HCT116 (cell line): ENCODE measurements at regions of chr19 and their contacts with region 1.

Region 1: DNA sequence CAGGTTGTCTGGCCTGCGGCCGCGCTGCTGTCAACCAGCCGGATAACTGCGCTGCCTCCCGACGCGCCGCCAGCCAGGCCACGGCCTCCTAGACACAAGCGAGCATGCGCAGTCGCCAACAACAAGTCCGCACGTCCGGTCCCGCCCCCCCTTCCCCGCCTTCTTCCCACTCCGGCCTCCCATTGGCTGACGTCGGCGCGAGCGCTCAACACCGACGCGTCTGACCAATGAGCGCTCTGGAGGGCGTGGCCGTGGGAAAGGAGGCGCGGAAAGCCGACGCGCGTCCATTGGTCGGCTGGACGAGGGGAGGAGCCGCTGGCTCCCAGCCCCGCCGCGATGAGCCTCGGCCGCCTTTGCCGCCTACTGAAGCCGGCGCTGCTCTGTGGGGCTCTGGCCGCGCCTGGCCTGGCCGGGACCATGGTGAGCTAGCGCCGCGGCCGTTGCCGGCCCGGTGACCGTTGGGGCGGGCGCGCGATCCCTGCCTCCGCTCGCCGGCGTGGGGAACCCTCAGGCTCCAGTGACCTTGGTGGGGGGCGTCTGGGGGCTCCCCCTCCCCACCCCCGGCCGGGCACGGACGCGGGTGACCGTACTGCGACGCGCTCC is at the start of gene GPX4:
- DNase-seq: peak; percentile 98
- ATAC-seq: peak; percentile 73
- H3K4me3 ChIP-seq: peak within 1 kb of the TSS; percentile 61 to 88
- H3K27ac ChIP-seq: peak within 1 kb of the TSS; percentile 99
- H3K4me1 ChIP-seq: peaks cover 32 to 74% of the 10 kb centered on the region in 2 experiments
- H3K27me3 ChIP-seq: no peaks in the 10 kb centered on the region
- CTCF ChIP-seq: no peak
- POLR2A ChIP-seq: peak; percentile 97
- RAD21 ChIP-seq: no peak
- total RNA-seq, gene GPX4: 481 TPM

Region 2: GRCh38 chr19:1015061-1015781 is 88.6 kb before region 1 on chr19:
- CTCF ChIA-PET with region 1: no interaction called
- POLR2A ChIA-PET with region 1: no interaction called
- RAD21 ChIA-PET with region 1: no interaction called
- intact Hi-C with region 1: no loop called
- DNase-seq: no peak
- ATAC-seq: no peak
- H3K4me3 ChIP-seq: no peak overlapping the region
- H3K27ac ChIP-seq: no peak overlapping the region
- H3K4me1 ChIP-seq: peaks cover 32 to 37% of the 10 kb centered on the region in 2 experiments
- H3K27me3 ChIP-seq: no peaks in the 10 kb centered on the region
- CTCF ChIP-seq: no peak
- POLR2A ChIP-seq: no peak
- RAD21 ChIP-seq: no peak

Region 3: GRCh38 chr19:1026189-1027019 is 77.4 kb before region 1 on chr19 and contains the start of gene CNN2:
- CTCF ChIA-PET with region 1: no interaction called
- POLR2A ChIA-PET with region 1: interaction called, 7 read pairs
- RAD21 ChIA-PET with region 1: no interaction called
- intact Hi-C with region 1: loop called (anchors 5 kb)
- DNase-seq: no peak
- ATAC-seq: peak; percentile 70
- H3K4me3 ChIP-seq: peak within 1 kb of the TSS; percentile 95 to 99
- H3K27ac ChIP-seq: peak within 1 kb of the TSS; percentile 99
- H3K4me1 ChIP-seq: peaks cover 29 to 46% of the 10 kb centered on the region in 2 experiments
- H3K27me3 ChIP-seq: no peaks in the 10 kb centered on the region
- CTCF ChIP-seq: no peak
- POLR2A ChIP-seq: no peak
- RAD21 ChIP-seq: no peak
- total RNA-seq, gene CNN2: 212 TPM

Region 4: DNA sequence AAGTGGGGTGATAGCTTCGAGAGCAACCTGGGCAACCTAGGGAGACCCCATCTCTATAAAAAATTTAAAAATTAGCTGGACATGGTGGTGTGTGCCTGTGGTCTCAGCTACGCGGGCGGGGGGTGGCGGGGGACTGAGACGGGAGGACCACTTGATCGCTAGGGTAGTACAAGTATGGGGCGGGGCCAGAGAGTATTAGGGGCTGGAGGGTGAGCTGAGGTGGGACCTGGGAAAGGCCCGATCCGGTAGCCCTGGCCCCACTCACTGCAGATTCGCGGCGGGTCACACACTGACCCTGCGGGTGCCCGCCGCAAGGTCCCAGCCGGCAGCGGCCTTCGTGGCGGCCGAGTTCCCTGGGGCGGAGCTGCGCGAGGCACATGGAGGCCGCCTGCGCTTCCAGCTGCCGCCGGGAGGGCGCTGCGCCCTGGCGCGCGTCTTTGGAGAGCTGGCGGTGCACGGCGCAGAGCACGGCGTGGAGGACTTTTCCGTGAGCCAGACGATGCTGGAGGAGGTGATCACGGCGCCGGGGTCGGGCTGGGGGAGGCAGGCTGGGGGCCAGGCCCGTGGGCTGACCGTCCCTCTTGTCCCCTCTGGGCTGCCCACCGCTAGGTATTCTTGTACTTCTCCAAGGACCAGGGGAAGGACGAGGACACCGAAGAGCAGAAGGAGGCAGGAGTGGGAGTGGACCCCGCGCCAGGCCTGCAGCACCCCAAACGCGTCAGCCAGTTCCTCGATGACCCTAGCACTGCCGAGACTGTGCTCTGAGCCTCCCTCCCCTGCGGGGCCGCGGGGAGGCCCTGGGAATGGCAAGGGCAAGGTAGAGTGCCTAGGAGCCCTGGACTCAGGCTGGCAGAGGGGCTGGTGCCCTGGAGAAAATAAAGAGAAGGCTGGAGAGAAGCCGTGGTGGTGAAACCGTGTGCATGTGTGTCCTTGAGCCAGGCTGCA is 38.9 kb before region 1 on chr19:
- CTCF ChIA-PET with region 1: interaction called, 3 read pairs
- POLR2A ChIA-PET with region 1: interaction called, 3 read pairs
- RAD21 ChIA-PET with region 1: interaction called, 3 to 4 read pairs
- intact Hi-C with region 1: loop called (anchors 5 kb)
- DNase-seq: peak; percentile 56
- ATAC-seq: peak; percentile 62
- H3K4me3 ChIP-seq: peak overlapping the region; percentile 64 to 78
- H3K27ac ChIP-seq: peak overlapping the region; percentile 100
- H3K4me1 ChIP-seq: peaks cover 36 to 71% of the 10 kb centered on the region in 2 experiments
- H3K27me3 ChIP-seq: no peaks in the 10 kb centered on the region
- CTCF ChIP-seq: peak in 2 of 3 experiments; percentile 70 to 83; a peak in 4 of 6 replicates
- POLR2A ChIP-seq: peak; percentile 43
- RAD21 ChIP-seq: no peak

Region 5: GRCh38 chr19:1082172-1082927 is 21.5 kb before region 1 on chr19:
- CTCF ChIA-PET with region 1: no interaction called
- POLR2A ChIA-PET with region 1: interaction called, 17 read pairs
- RAD21 ChIA-PET with region 1: no interaction called
- intact Hi-C with region 1: no loop called
- DNase-seq: peak; percentile 89
- ATAC-seq: peak; percentile 88
- H3K4me3 ChIP-seq: peak overlapping the region in 1 of 2 experiments; percentile 30; a peak in 1 of 4 replicates
- H3K27ac ChIP-seq: peak overlapping the region; percentile 83
- H3K4me1 ChIP-seq: peaks cover 4 to 18% of the 10 kb centered on the region in 2 experiments
- H3K27me3 ChIP-seq: no peaks in the 10 kb centered on the region
- CTCF ChIP-seq: no peak
- POLR2A ChIP-seq: no peak
- RAD21 ChIP-seq: no peak

Region 6: DNA sequence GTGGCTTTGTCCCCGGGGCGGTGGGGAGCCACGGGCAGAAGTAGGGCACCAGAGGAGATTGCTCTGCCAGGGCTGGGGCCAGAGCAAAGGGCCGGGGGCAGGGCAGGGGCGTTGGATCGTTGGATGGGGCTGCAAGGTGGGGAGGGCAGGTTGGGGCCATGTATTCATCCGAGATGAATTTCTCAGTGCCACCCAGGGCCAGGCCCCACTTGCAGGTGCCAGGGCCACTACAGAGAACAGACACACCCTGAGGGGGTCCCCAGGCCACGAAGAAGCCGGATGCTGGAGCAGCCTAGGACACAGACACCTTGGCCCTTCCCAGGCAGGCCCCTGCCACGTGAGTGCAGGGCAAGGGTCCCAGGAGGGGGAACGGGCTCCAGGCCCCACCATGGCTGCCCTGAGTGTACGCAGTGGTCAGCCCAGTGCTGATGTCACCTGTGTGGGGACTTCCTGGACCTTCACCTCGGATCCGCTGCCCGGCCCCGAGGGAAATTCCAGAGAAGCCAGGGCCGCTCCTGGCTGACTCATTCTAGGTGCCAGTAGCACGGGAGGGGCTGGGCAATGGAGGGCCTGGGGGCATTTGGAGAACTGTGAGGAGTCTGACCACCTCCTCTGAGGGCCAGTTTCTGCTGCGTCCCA is 79.8 kb after region 1 on chr19:
- CTCF ChIA-PET with region 1: no interaction called
- POLR2A ChIA-PET with region 1: interaction called, 3 read pairs
- RAD21 ChIA-PET with region 1: no interaction called
- intact Hi-C with region 1: loop called (anchors 5 kb)
- DNase-seq: peak; percentile 73
- ATAC-seq: peak; percentile 74
- H3K4me3 ChIP-seq: peak overlapping the region; percentile 9 to 28; a peak in 3 of 4 replicates
- H3K27ac ChIP-seq: peak overlapping the region; percentile 89
- H3K4me1 ChIP-seq: peaks cover 68 to 88% of the 10 kb centered on the region in 2 experiments
- H3K27me3 ChIP-seq: no peaks in the 10 kb centered on the region
- CTCF ChIP-seq: no peak
- POLR2A ChIP-seq: no peak
- RAD21 ChIP-seq: no peak; the same call in 1 of the 2 replicates

Region 7: DNA sequence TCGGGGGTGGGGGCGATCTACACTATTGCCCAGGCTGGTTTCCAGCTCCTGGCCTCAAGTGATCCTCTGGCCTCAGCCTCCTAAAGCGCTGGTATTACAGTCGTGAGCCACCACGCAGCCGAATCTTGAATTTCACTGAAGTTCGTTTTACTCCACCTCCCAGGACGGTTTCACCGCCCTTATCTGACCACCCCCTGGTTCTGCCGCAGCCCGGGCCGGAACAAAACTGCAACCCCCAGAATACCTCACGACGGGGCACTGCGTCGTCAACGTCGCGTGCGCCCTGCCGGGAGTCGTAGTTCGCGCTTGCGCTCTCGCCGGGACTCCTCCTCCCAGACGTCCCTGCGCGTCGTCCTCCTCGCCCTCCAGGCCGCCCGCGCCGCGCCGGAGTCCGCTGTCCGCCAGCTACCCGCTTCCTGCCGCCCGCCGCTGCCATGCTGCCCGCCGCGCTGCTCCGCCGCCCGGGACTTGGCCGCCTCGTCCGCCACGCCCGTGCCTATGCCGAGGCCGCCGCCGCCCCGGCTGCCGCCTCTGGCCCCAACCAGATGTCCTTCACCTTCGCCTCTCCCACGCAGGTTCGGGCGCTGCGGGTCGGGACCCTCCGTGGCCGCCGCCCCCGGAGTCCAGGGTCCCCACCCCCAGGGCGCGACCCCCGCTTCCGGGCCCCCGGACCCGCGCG is 137.7 kb after region 1 on chr19 and contains the start of gene ATP5F1D:
- CTCF ChIA-PET with region 1: no interaction called
- POLR2A ChIA-PET with region 1: no interaction called
- RAD21 ChIA-PET with region 1: no interaction called
- intact Hi-C with region 1: loop called (anchors 5 kb)
- DNase-seq: no peak
- ATAC-seq: peak; percentile 60
- H3K4me3 ChIP-seq: peak within 1 kb of the TSS; percentile 87 to 89
- H3K27ac ChIP-seq: peak within 1 kb of the TSS; percentile 100
- H3K4me1 ChIP-seq: peaks cover 52 to 70% of the 10 kb centered on the region in 2 experiments
- H3K27me3 ChIP-seq: no peaks in the 10 kb centered on the region
- CTCF ChIP-seq: no peak
- POLR2A ChIP-seq: peak; percentile 61
- RAD21 ChIP-seq: no peak
- total RNA-seq, gene ATP5F1D: 428 TPM